MCF 10A (cell line): ENCODE measurements at regions of chr4 and their contacts with region 1.

Region 1: GRCh38 chr4:61374447-61374891 is 174.3 kb downstream of the ADGRL3 start:
- DNase-seq: peak; percentile 28
- H3K4me3 Mint-ChIP-seq: peak overlapping the region; percentile 28
- H3K27ac Mint-ChIP-seq: peak overlapping the region; percentile 76
- H3K4me1 Mint-ChIP-seq: peaks cover 15% of the 10 kb centered on the region
- H3K27me3 Mint-ChIP-seq: no peaks in the 10 kb centered on the region
- CTCF ChIP-seq: no peak

Region 2: GRCh38 chr4:61086357-61086756 is 288.1 kb before region 1 on chr4:
- CTCF ChIA-PET with region 1: no interaction called
- POLR2A ChIA-PET with region 1: no interaction called
- intact Hi-C with region 1: no loop called
- DNase-seq: no peak
- H3K4me3 Mint-ChIP-seq: no peak overlapping the region
- H3K27ac Mint-ChIP-seq: no peak overlapping the region
- H3K4me1 Mint-ChIP-seq: no peaks in the 10 kb centered on the region
- H3K27me3 Mint-ChIP-seq: no peaks in the 10 kb centered on the region
- CTCF ChIP-seq: no peak

Region 3: GRCh38 chr4:61468091-61468720 is 93.7 kb after region 1 on chr4:
- CTCF ChIA-PET with region 1: no interaction called
- POLR2A ChIA-PET with region 1: interaction called, 3 read pairs
- intact Hi-C with region 1: loop called (anchors 10 kb)
- DNase-seq: peak; percentile 93
- H3K4me3 Mint-ChIP-seq: no peak overlapping the region
- H3K27ac Mint-ChIP-seq: peak overlapping the region; percentile 61
- H3K4me1 Mint-ChIP-seq: peaks cover 28% of the 10 kb centered on the region
- H3K27me3 Mint-ChIP-seq: no peaks in the 10 kb centered on the region
- CTCF ChIP-seq: no peak

Region 4: GRCh38 chr4:61545902-61546480 is 171.5 kb after region 1 on chr4:
- CTCF ChIA-PET with region 1: no interaction called
- POLR2A ChIA-PET with region 1: no interaction called
- intact Hi-C with region 1: no loop called
- DNase-seq: no peak
- H3K4me3 Mint-ChIP-seq: no peak overlapping the region
- H3K27ac Mint-ChIP-seq: no peak overlapping the region
- H3K4me1 Mint-ChIP-seq: peaks cover 9% of the 10 kb centered on the region
- H3K27me3 Mint-ChIP-seq: no peaks in the 10 kb centered on the region
- CTCF ChIP-seq: no peak

Region 5: DNA sequence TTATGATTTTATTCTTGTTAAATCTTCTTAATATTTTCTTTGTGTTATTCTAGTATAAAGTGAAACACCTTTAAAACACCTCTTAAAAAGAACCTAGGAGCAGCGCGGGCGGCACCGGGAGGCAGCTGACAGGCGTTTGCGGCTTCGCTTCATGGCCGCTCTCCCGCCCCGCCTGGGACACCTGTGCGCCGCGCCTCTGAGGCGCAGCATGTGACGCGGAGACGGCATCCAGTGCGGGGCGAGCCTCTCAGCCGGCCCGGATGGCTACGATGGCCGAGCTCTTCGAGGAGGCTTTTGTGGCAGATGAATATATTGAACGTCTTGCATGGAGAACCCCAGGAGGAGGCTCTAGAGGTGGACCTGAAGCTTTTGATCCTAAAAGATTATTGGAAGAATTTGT is 1442.1 kb after region 1 on chr4:
- CTCF ChIA-PET with region 1: no interaction called
- POLR2A ChIA-PET with region 1: no interaction called
- intact Hi-C with region 1: no loop called
- DNase-seq: no peak
- H3K4me3 Mint-ChIP-seq: no peak overlapping the region
- H3K27ac Mint-ChIP-seq: no peak overlapping the region
- H3K4me1 Mint-ChIP-seq: peaks cover 15% of the 10 kb centered on the region
- H3K27me3 Mint-ChIP-seq: no peaks in the 10 kb centered on the region
- CTCF ChIP-seq: no peak